Testis (tissue), 5 donors: ENCODE measurements at regions of chr1 and their contacts with region 1.

Region 1: DNA sequence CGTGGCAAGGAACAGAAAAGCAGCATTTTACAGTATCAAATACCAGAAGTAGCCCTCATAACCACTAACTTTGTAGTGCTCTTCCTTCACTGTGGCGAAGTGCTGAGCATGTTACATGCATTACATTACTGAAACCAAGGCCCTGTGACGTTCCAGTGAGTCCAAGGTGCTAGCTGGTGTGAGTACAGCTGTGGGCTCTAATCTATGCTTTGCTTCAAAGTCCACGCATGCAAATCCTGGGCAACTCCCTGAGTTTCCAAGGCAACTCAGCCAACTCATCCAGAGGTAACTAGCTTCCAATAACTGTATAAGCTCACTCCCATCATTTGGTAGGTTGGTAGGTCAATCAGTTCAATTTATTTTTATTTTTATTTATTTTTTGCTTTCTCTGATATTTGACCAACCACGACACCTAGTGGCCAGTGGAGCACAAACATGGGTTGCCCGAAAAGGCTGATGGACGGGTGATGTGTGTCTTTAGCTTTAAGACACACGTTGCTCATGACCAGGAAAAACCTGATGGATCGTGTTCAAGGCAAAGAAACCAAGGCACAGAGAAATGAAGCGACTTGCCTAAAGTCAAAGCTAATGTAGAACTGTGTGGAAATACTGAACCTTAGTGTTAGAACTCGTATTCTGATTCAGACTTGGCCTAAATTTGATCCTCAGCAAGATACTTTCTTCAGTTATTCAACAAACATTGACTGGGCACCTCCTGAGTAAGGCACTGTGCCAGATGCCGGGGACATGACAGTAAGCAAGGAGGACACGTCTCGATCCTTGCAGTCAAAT is 73.0 kb downstream of the GNG12 start:
- DNase-seq: peak; percentile 68
- H3K4me3 ChIP-seq: no peak overlapping the region
- H3K27ac ChIP-seq: peak overlapping the region in 1 of 2 donors; percentile 7
- H3K4me1 ChIP-seq: peaks cover 5% of the 10 kb centered on the region
- H3K27me3 ChIP-seq: no peaks in the 10 kb centered on the region
- CTCF ChIP-seq: peak; percentile 72 to 88 (median 83)
- POLR2A ChIP-seq: no peak

Region 2: GRCh38 chr1:67227196-67227595 is 533.0 kb before region 1 on chr1:
- intact Hi-C with region 1: no loop called
- DNase-seq: no peak
- H3K4me3 ChIP-seq: no peak overlapping the region
- H3K27ac ChIP-seq: no peak overlapping the region
- H3K4me1 ChIP-seq: no peaks in the 10 kb centered on the region
- H3K27me3 ChIP-seq: no peaks in the 10 kb centered on the region
- CTCF ChIP-seq: no peak
- POLR2A ChIP-seq: no peak

Region 3: DNA sequence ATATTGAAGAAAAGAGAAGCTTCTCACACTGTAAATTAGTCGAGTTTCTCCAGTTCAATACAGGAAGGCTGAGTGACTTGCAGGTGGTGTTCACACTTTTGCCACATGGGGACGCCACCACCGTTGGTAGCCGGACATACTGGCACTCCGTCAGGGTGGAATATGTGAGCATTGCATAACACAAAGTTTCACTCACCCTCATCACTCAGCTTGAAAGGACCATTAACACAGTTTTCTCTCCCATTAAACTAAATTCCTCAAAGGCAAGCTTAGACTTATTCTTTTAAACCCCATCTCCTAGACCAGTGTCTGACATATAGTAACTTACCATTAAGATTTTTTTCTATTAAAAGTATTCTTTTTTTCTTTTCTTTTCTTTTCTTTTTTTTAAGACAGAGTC is 224.8 kb before region 1 on chr1:
- intact Hi-C with region 1: loop called (anchors 5 kb)
- DNase-seq: peak; percentile 90
- H3K4me3 ChIP-seq: no peak overlapping the region
- H3K27ac ChIP-seq: no peak overlapping the region
- H3K4me1 ChIP-seq: no peaks in the 10 kb centered on the region
- H3K27me3 ChIP-seq: no peaks in the 10 kb centered on the region
- CTCF ChIP-seq: peak; percentile 97 to 98 (median 97)
- POLR2A ChIP-seq: no peak

Region 4: DNA sequence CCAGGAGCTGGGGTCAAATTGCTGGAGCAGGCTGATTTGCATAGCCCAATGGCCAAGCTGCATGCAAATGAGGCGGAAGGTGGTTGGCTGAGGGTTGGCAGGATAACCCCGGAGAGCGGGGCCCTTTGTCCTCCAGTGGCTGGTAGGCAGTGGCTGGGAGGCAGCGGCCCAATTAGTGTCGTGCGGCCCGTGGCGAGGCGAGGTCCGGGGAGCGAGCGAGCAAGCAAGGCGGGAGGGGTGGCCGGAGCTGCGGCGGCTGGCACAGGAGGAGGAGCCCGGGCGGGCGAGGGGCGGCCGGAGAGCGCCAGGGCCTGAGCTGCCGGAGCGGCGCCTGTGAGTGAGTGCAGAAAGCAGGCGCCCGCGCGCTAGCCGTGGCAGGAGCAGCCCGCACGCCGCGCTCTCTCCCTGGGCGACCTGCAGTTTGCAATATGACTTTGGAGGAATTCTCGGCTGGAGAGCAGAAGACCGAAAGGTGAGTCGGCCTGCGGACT is 75.1 kb before region 1 on chr1 and contains the start of gene GADD45A:
- intact Hi-C with region 1: loop called (anchors 5 kb)
- DNase-seq: peak; percentile 99
- H3K4me3 ChIP-seq: peak within 1 kb of the TSS; percentile 84 to 89
- H3K27ac ChIP-seq: peak within 1 kb of the TSS; percentile 85 to 86
- H3K4me1 ChIP-seq: peaks cover 10% of the 10 kb centered on the region
- H3K27me3 ChIP-seq: no peaks in the 10 kb centered on the region
- CTCF ChIP-seq: no peak
- POLR2A ChIP-seq: peak; percentile 97
- total RNA-seq, gene GADD45A: 29.8 to 47.0 TPM

Region 5: GRCh38 chr1:68116643-68117235 is 356.5 kb after region 1 on chr1:
- intact Hi-C with region 1: loop called (anchors 10 kb)
- DNase-seq: peak; percentile 66
- H3K4me3 ChIP-seq: no peak overlapping the region
- H3K27ac ChIP-seq: no peak overlapping the region
- H3K4me1 ChIP-seq: peaks cover 11% of the 10 kb centered on the region
- H3K27me3 ChIP-seq: no peaks in the 10 kb centered on the region
- CTCF ChIP-seq: peak; percentile 89
- POLR2A ChIP-seq: no peak